Activated B cell treated with CpG ODN at 0.5 μM for 24 hours (primary cell): ENCODE measurements at regions of chr3 and their contacts with region 1.

Region 1: DNA sequence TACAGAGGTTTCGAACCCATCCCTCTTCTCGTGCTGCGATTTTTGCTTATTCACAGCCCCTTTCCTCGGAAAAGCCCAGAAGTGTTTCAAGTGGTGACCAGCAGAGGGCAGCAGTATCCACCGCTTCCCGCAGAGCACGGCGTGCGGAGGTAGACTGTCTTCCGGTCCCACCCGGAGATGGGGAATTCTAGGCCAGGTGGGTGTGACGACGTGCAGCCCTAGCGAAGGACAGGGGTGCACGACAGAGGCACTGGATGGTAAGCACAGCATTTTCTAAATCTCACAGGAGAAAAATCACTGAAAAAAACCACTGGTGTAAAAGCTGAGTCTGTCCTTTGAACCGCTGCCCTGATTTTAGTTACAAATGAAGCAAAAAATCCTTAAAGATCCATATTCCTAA is 7.4 kb upstream of the PSMD6 start:
- DNase-seq: peak; percentile 59
- ATAC-seq: peak; percentile 98
- H3K4me3 Mint-ChIP-seq: peak overlapping the region; percentile 80
- H3K27ac Mint-ChIP-seq: peak overlapping the region; percentile 76
- H3K4me1 Mint-ChIP-seq: peaks cover 6% of the 10 kb centered on the region
- H3K27me3 Mint-ChIP-seq: peaks cover 20% of the 10 kb centered on the region
- CTCF ChIP-seq: no peak

Region 2: GRCh38 chr3:64224826-64225610 is 194.3 kb after region 1 on chr3 and contains the start of gene PRICKLE2:
- CTCF ChIA-PET with region 1: no interaction called
- POLR2A ChIA-PET with region 1: no interaction called
- intact Hi-C with region 1: loop called (anchors 10 kb)
- DNase-seq: no peak
- ATAC-seq: peak; percentile 87
- H3K4me3 Mint-ChIP-seq: peak within 1 kb of the TSS; percentile 81
- H3K27ac Mint-ChIP-seq: peak within 1 kb of the TSS; percentile 86
- H3K4me1 Mint-ChIP-seq: peaks cover 14% of the 10 kb centered on the region
- H3K27me3 Mint-ChIP-seq: no peaks in the 10 kb centered on the region
- CTCF ChIP-seq: no peak
- total RNA-seq, gene PRICKLE2: 0.33 and 1.2 TPM in 2 replicates

Region 3: DNA sequence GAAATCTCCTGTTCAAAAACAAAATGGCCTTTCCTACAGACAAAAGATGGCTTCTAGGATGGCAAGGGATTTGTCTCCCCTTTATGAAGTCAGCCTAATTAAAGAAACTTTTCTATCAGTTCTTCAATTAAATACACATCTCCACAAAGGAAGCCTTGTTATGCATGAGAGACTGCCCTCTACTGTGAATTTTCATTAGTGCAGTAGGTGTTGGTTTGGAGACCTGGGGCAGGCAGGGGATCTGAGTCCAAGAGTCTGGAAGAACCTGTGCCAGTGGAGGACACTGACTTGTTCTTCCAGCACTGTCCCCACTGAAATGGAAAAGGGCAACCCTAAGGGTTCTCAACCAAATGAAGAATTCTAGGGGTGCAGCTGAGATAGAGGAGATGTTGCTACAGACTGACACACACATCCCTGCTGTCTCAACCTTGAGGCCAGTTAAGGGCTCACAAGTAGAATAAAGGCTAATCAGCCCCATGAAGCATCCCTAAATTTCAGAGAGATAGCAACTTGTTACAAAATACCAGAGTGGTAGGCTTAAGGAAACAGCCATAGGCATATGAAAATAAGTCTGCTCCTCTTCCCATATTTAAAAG is 368.6 kb after region 1 on chr3:
- CTCF ChIA-PET with region 1: interaction called, 5 read pairs
- POLR2A ChIA-PET with region 1: no interaction called
- intact Hi-C with region 1: loop called (anchors 1 kb)
- DNase-seq: no peak
- ATAC-seq: no peak
- H3K4me3 Mint-ChIP-seq: no peak overlapping the region
- H3K27ac Mint-ChIP-seq: no peak overlapping the region
- H3K4me1 Mint-ChIP-seq: no peaks in the 10 kb centered on the region
- H3K27me3 Mint-ChIP-seq: no peaks in the 10 kb centered on the region
- CTCF ChIP-seq: no peak

Region 4: DNA sequence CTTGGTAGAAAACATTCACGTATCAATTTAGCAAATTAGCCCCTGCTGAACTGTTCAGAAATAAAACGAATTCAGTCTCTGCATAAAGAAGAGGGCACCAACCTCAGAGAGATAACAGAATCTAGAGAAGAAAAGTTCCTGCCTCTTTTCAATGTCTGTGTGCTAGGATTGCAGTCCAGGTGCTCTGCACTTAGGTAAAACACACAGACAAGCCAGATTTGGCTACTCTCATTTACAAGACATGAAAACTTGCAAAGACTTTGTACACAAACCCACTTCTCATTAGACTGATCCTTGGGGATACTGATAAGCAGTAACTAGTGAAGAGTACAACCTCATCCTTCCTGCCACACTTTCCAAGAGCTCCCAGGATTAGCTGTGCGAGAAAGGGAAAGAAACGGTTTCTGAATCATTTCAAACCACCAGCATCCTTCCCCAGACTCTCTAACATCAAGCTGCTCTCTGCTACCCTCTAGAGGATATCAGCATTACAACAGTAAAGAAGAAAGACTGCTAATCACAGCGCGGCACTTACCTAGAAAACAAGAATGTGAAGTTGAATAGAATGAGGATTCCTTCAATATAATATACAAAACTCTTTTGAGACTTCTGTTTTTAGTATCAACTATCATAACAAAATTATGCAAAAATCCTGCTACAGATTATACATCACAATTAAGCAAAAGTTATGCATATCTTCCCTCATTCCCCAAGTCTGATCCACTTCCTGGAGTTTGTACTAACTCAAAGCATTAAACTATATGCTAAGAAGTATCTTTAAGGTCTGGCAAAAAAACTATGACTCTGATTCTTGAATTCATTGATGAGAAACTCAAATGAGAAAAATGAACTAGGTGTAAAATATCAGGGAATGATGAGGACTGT is 1701.6 kb after region 1 on chr3:
- CTCF ChIA-PET with region 1: no interaction called
- POLR2A ChIA-PET with region 1: no interaction called
- intact Hi-C with region 1: loop called (anchors 1 kb)
- DNase-seq: no peak
- ATAC-seq: peak; percentile 50
- H3K4me3 Mint-ChIP-seq: no peak overlapping the region
- H3K27ac Mint-ChIP-seq: no peak overlapping the region
- H3K4me1 Mint-ChIP-seq: no peaks in the 10 kb centered on the region
- H3K27me3 Mint-ChIP-seq: peaks cover 5% of the 10 kb centered on the region
- CTCF ChIP-seq: no peak